Panc1 (cell line): ENCODE measurements at regions of chr5 and their contacts with region 1.

Region 1: GRCh38 chr5:132820162-132820754 is 7.2 kb downstream of the SOWAHA start:
- DNase-seq: peak; percentile 64
- ATAC-seq: peak; percentile 94
- H3K4me3 ChIP-seq: peak overlapping the region in 1 of 2 experiments; percentile 0; a peak in 1 of 4 replicates
- H3K27ac ChIP-seq: no peak overlapping the region
- H3K4me1 ChIP-seq: peaks cover 14% of the 10 kb centered on the region
- H3K27me3 ChIP-seq: no peaks in the 10 kb centered on the region
- CTCF ChIP-seq: peak; percentile 93

Region 2: GRCh38 chr5:132369474-132370180 is 450.6 kb before region 1 on chr5 and contains the start of gene SLC22A5:
- CTCF ChIA-PET with region 1: no interaction called
- POLR2A ChIA-PET with region 1: interaction called, 15 read pairs
- in situ Hi-C with region 1: no loop called
- intact Hi-C with region 1: no loop called
- DNase-seq: no peak
- ATAC-seq: peak; percentile 96
- H3K4me3 ChIP-seq: peak within 1 kb of the TSS; percentile 66 to 79
- H3K27ac ChIP-seq: peak within 1 kb of the TSS; percentile 82
- H3K4me1 ChIP-seq: peaks cover 24% of the 10 kb centered on the region
- H3K27me3 ChIP-seq: no peaks in the 10 kb centered on the region
- CTCF ChIP-seq: no peak
- total RNA-seq, gene SLC22A5: 9.5 TPM

Region 3: DNA sequence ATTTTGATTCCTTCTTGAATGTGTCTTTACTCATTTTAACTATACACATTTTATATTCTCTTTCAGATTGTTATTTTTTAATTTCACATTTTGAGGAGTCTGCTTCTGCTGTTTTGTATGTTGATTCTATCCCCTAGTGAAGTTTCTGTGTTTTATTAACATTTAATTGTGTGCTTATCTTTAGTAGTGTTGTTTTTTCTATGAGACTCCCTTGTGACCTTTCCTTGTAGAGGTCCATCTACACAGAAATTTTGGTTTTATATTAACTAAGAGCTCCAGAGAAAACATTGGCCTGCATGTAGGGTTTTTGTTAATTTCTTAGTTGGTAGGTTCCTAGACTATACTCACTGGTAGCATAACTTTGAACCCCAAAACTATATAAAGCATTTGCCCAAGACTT is 197.7 kb before region 1 on chr5:
- CTCF ChIA-PET with region 1: interaction called, 13 read pairs
- POLR2A ChIA-PET with region 1: no interaction called
- in situ Hi-C with region 1: no loop called
- intact Hi-C with region 1: no loop called
- DNase-seq: no peak
- ATAC-seq: no peak
- H3K4me3 ChIP-seq: no peak overlapping the region
- H3K27ac ChIP-seq: no peak overlapping the region
- H3K4me1 ChIP-seq: no peaks in the 10 kb centered on the region
- H3K27me3 ChIP-seq: no peaks in the 10 kb centered on the region
- CTCF ChIP-seq: no peak

Region 4: GRCh38 chr5:132714456-132715307 is 105.6 kb before region 1 on chr5:
- CTCF ChIA-PET with region 1: no interaction called
- POLR2A ChIA-PET with region 1: interaction called, 13 read pairs
- in situ Hi-C with region 1: no loop called
- intact Hi-C with region 1: no loop called
- DNase-seq: no peak
- ATAC-seq: 0 out of 2 replicates have a peak, but pooled peaks have one; percentile 42
- H3K4me3 ChIP-seq: no peak overlapping the region
- H3K27ac ChIP-seq: no peak overlapping the region
- H3K4me1 ChIP-seq: no peaks in the 10 kb centered on the region
- H3K27me3 ChIP-seq: no peaks in the 10 kb centered on the region
- CTCF ChIP-seq: peak; percentile 54

Region 5: GRCh38 chr5:132753135-132753987 is 66.9 kb before region 1 on chr5:
- CTCF ChIA-PET with region 1: interaction called, 15 read pairs
- POLR2A ChIA-PET with region 1: interaction called, 5 read pairs
- in situ Hi-C with region 1: no loop called
- intact Hi-C with region 1: loop called (anchors 10 kb)
- DNase-seq: no peak
- ATAC-seq: peak; percentile 76
- H3K4me3 ChIP-seq: no peak overlapping the region
- H3K27ac ChIP-seq: no peak overlapping the region
- H3K4me1 ChIP-seq: no peaks in the 10 kb centered on the region
- H3K27me3 ChIP-seq: no peaks in the 10 kb centered on the region
- CTCF ChIP-seq: peak; percentile 53

Region 6: DNA sequence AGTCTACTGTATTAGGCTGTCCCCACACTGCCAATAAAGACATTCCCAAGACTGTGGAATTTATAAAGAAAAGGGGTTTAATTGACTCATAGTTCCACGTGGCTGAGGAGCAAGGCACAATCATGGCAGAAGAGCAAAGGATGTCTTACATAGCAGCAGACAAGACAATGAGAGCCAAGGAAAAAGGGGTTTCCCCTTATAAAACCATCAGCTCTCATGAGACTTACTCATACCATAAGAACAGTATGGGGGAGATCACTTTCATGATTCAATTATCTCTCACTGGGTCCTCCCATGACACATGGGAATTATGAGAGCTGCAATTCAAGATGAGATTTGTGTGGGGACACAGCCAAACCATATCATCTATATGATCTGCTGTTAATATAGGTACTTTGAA is 806.9 kb after region 1 on chr5:
- CTCF ChIA-PET with region 1: no interaction called
- POLR2A ChIA-PET with region 1: no interaction called
- in situ Hi-C with region 1: no loop called
- intact Hi-C with region 1: no loop called
- DNase-seq: no peak
- ATAC-seq: no peak
- H3K4me3 ChIP-seq: no peak overlapping the region
- H3K27ac ChIP-seq: no peak overlapping the region
- H3K4me1 ChIP-seq: no peaks in the 10 kb centered on the region
- H3K27me3 ChIP-seq: no peaks in the 10 kb centered on the region; the same call in 1 of the 2 replicates
- CTCF ChIP-seq: no peak